Natural killer cell (primary cell): ENCODE measurements at regions of chr5 and their contacts with region 1.

Region 1: DNA sequence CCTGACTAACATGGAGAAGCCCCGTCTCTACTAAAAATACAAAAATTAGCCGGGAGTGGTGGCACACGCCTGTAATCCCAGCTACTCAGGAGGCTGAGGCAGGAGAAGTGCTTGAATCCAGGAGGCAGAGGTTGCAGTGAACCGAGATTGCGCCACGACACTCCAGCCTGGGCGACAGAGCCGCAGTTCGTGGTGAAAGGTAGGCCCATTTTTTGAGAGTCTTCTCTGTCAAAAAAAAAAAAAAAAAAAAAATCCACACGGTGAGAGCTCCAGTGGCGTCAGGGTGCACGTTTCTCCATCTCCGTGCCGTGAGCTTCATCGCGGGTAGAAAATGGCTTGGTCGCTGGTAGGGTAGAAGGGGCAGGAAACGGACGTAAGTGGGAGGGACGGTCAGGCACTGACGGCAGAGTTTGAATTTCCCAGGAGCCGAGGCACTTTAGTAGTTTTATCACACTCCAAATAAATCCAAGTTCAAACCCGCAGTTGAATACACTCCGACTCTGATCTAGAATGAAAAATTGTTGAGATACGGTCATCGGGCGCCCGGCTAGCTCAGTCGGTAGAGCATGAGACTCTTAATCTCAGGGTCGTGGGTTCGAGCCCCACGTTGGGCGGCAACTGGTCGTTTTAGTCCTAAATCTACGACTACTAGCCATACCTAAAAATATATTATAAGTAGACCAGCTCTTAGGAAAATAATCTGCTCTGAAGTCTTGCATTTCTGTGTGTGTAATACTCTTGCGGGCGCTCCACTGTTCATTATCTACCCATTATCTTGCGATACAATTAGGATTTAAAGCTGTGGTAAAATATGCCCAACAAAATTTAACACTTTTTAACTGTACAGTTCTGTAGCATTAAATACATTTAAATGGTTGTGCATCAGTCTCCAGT is 2.5 kb upstream of the TRIM7 start:
- DNase-seq: peak; percentile 66 to 90
- ATAC-seq: peak; percentile 66 to 74 (median 72)
- H3K4me3 ChIP-seq: peak overlapping the region; percentile 31
- H3K4me3 Mint-ChIP-seq: peak overlapping the region; percentile 99
- H3K27ac ChIP-seq: peak overlapping the region; percentile 58
- H3K27ac Mint-ChIP-seq: peak overlapping the region; percentile 91 to 99
- H3K4me1 ChIP-seq: peaks cover 38% of the 10 kb centered on the region
- H3K4me1 Mint-ChIP-seq: peaks cover 33 to 48% of the 10 kb centered on the region in 2 donors
- H3K27me3 ChIP-seq: peaks cover 10% of the 10 kb centered on the region
- H3K27me3 Mint-ChIP-seq: peaks cover 24 to 27% of the 10 kb centered on the region in 2 donors
- CTCF ChIP-seq: no peak

Region 2: DNA sequence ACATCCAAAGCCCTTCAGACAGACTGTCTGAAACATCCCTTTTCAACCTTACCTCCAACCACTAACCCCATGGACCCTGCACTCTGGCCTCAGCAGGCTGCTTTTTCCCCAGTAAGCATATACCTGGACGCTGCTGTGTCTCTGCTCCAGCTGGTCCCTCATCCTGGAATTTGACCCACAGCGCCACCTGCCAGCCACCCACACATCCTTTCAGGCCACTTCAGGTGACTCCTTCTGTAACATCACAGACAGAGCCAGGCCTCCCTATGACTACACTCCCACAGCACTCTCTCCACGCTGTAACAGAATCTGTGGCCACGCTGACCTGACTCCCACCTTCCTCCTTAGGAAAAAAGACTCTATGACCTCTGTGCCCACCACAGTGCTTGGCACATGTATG is 408.3 kb before region 1 on chr5:
- intact Hi-C with region 1: no loop called
- DNase-seq: peak in 1 of 2 donors; percentile 51
- ATAC-seq: no peak
- H3K4me3 ChIP-seq: no peak overlapping the region
- H3K4me3 Mint-ChIP-seq: peak overlapping the region; percentile 32
- H3K27ac ChIP-seq: no peak overlapping the region
- H3K27ac Mint-ChIP-seq: peak overlapping the region; percentile 75 to 83
- H3K4me1 ChIP-seq: peaks cover 71% of the 10 kb centered on the region
- H3K4me1 Mint-ChIP-seq: peaks cover 81 to 87% of the 10 kb centered on the region in 2 donors
- H3K27me3 ChIP-seq: no peaks in the 10 kb centered on the region
- H3K27me3 Mint-ChIP-seq: no peaks in the 10 kb centered on the region
- CTCF ChIP-seq: no peak

Region 3: DNA sequence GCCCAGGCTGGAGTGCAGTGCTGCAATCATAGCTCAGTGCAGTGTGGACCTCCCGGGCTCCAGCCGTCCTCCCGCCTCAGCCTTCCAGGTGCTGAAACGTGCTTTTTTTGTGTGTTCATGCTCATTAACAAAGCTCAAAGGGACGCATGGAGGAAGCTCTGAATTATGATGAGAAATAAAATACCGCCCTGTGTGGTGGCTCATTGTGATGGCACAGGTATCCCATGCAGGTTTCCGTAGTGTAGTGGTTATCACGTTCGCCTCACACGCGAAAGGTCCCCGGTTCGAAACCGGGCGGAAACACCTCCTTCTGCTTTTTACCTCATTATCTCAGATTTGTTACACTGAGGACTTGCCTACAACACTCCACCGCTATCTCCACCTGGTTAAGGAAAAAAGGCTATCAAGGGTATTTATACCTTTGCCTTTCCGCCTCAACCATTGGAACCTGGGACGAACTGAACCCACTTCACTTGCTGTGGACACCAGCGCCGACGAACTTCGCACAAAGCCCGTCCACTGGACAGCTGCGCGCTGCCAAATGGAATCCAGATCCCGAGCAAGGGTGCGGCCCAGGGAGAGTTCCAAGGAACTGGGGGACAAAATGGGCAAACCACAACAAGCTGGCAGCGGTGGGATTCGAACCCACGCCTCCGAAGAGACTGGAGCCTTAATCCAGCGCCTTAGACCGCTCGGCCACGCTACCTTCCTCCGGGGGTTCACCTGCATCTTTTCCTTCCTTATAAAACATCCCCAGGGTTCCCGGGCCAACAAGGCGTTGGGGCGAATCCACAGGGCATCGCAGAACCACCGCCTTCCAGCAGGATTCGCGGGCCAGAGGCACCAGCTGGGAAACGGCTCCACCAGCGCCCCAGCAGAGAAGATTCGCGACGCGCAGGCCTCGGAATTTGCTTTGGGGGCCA is 33.8 kb before region 1 on chr5:
- intact Hi-C with region 1: loop called (anchors 1 kb)
- DNase-seq: peak in 1 of 2 donors; percentile 79
- ATAC-seq: peak; percentile 70 to 80 (median 75)
- H3K4me3 ChIP-seq: no peak overlapping the region
- H3K4me3 Mint-ChIP-seq: peak overlapping the region; percentile 59
- H3K27ac ChIP-seq: no peak overlapping the region
- H3K27ac Mint-ChIP-seq: peak overlapping the region; percentile 14 to 39
- H3K4me1 ChIP-seq: peaks cover 27% of the 10 kb centered on the region
- H3K4me1 Mint-ChIP-seq: peaks cover 26 to 35% of the 10 kb centered on the region in 2 donors
- H3K27me3 ChIP-seq: peaks cover 25% of the 10 kb centered on the region
- H3K27me3 Mint-ChIP-seq: peaks cover 49 to 52% of the 10 kb centered on the region in 2 donors
- CTCF ChIP-seq: no peak

Region 4: GRCh38 chr5:181194489-181195248 is 12.8 kb before region 1 on chr5:
- intact Hi-C with region 1: no loop called
- DNase-seq: no peak
- ATAC-seq: no peak
- H3K4me3 ChIP-seq: no peak overlapping the region
- H3K4me3 Mint-ChIP-seq: no peak overlapping the region
- H3K27ac ChIP-seq: no peak overlapping the region
- H3K27ac Mint-ChIP-seq: no peak overlapping the region
- H3K4me1 ChIP-seq: peaks cover 21% of the 10 kb centered on the region
- H3K4me1 Mint-ChIP-seq: peaks cover 29 to 34% of the 10 kb centered on the region in 2 donors
- H3K27me3 ChIP-seq: no peaks in the 10 kb centered on the region
- H3K27me3 Mint-ChIP-seq: peaks cover 0 to 10% of the 10 kb centered on the region in 2 donors
- CTCF ChIP-seq: no peak